Heart right ventricle (tissue), 16 donors: ENCODE measurements at regions of chr2 and their contacts with region 1.

Region 1: DNA sequence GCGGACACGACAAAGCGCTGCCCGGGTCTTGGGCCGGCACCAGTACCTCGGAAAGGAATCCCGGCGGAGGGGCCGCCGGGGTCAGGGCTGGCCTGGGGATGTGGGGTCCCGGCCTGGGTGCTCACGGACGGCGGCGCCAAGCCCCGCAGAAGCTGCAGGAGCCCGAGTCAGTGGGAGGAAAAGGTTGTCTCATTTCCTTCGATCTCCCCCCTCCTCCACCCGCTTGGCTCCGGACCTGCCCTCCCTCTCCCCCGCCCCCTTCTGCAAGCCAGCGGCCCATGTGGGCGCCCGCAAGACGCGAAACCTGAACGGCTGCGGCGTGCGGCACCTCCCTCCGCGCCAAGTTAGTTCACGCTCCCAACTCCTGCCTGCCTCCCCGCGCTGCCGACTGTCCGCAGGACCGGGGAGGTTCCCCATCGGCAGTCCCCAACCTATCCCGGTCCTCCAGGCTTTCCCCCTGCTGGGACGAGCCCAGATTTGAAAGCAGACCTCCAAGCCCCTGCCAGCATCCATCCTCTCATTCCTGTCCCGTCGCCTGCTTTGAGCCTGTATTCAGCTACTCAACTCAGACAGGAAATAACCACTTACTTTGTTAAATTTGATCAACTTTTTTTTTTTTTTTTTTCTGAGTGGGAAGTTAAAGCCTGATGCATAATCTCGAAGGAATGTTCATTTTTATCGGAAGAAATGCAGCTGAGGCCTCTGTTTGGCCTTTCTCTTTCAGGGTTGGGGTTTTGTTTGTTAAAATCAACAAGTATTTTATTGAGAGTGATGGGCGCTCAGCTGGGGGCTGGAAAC is at the start of gene EVA1A:
- DNase-seq: peak; percentile 31 to 46
- ATAC-seq: peak; percentile 57 to 81 (median 72)
- H3K4me3 ChIP-seq: peak within 1 kb of the TSS; percentile 51 to 73 (median 64)
- H3K27ac ChIP-seq: peak within 1 kb of the TSS in 9 of 10 donors; percentile 11 to 80 (median 64)
- H3K4me1 ChIP-seq: peaks cover 0 to 24% (median 12%) of the 10 kb centered on the region in 9 donors
- H3K27me3 ChIP-seq: peaks cover 0 to 54% (median 32%) of the 10 kb centered on the region in 7 donors
- CTCF ChIP-seq: no peak
- total RNA-seq, gene EVA1A: 0.17 to 3.4 (median 0.99) TPM

Region 2: DNA sequence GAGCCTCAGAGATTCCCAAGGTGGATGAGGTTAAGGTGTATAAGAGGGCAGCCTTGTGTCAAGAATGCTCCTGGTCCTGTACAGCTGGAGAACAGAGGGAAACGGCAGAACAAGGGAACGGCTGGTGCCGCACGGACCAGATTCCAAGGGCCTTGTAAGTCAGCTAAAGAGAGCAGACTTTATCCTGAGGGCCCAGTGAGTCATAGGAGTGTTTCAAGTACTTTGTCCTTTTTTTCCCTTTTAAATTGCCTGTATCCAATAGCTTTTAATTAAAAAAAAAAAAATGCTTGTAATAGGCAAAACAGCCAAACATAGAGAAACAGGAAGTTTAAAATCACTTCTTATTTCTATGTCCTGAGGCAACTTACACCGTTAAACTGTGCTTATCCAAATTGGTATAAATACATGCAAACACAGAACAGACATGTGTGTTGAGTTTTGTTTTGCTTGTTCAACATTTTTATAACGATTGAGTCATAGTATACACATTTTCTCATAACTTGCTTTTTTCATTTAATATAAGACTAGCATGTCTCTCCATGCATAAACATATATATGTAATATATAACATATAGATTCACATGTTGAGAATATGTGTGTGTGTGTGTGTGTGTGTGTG is 41.9 kb after region 1 on chr2:
- intact Hi-C with region 1: loop called in 2 of 10 experiments (anchors 5 kb)
- DNase-seq: no peak
- ATAC-seq: no peak
- H3K4me3 ChIP-seq: no peak overlapping the region
- H3K27ac ChIP-seq: no peak overlapping the region
- H3K4me1 ChIP-seq: no peaks in the 10 kb centered on the region
- H3K27me3 ChIP-seq: peaks cover 0 to 28% (median 9%) of the 10 kb centered on the region in 7 donors
- CTCF ChIP-seq: no peak

Region 3: GRCh38 chr2:75608684-75609333 is 47.8 kb after region 1 on chr2:
- intact Hi-C with region 1: loop called in 2 of 10 experiments (anchors 5 kb)
- DNase-seq: peak; percentile 35 to 55
- ATAC-seq: peak; percentile 70 to 90 (median 82)
- H3K4me3 ChIP-seq: peak overlapping the region in 6 of 10 donors; percentile 12 to 40 (median 20)
- H3K27ac ChIP-seq: no peak overlapping the region
- H3K4me1 ChIP-seq: peaks cover 0 to 9% (median 4%) of the 10 kb centered on the region in 9 donors
- H3K27me3 ChIP-seq: peaks cover 0 to 62% (median 29%) of the 10 kb centered on the region in 7 donors
- CTCF ChIP-seq: peak; percentile 83 to 97 (median 94)